ENCODE measurements at regions of chr11 and their contacts with region 1.

Region 1: DNA sequence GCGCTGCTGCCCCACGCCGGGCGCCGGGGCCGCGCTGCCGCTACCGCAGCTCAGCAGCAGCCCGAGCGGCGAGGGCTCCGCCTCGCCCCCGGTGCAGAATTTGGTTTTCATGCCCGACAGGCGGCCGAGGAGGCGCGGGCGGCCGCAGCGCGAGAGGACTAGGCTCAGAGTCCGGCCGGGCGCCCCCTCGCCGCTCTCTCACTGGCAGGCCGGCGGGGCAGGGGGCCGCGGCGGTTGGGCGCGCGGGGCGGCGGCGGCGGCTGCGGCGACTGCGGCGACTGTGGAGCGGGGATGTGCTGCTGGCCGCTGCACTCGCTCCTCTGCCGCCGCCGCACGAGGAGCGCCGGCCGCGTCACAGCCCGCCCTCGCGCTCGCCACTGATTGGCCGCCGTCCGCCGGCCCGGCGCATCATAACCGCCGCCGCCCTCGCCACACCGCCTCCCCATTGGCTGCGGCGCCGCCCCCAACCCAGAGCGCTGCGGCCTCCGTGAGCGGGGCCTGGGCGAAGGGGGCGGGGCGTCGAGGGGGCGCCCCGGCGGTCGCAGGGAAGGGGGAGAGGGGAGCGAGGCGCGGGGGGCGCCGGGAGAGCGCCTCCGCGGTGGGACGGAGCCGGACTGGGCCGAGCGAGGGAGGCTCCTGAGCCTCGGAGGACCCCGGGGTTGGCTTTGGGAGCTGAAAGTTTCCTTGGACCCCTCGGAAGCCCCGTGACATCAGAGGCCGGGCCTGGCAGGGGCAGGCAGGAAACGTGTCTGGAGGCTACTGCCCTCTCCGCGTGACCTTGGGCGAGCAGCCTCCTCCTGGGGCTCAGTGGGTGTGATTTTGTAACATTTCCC is at the start of gene CHKA:
- DNase-seq: peak; percentile 86
- H3K4me3 ChIP-seq: peak within 1 kb of the TSS; percentile 44 to 67 (median 67)
- H3K27ac ChIP-seq: peak within 1 kb of the TSS; percentile 33
- H3K4me1 ChIP-seq: peaks cover 12% of the 10 kb centered on the region
- H3K27me3 ChIP-seq: no peaks in the 10 kb centered on the region
- CTCF ChIP-seq: no peak
- total RNA-seq, gene CHKA: 11.5 to 13.2 TPM

Region 2: GRCh38 chr11:68038718-68039525 is 82.4 kb before region 1 on chr11 and contains the start of gene TCIRG1:
- CTCF ChIA-PET with region 1: no interaction called
- dilution Hi-C with region 1: no loop called
- in situ Hi-C with region 1: no loop called
- intact Hi-C with region 1: loop called (anchors 2 kb)
- DNase-seq: peak; percentile 59
- H3K4me3 ChIP-seq: peak within 1 kb of the TSS; percentile 61 to 66 (median 64)
- H3K27ac ChIP-seq: peak within 1 kb of the TSS; percentile 3
- H3K4me1 ChIP-seq: peaks cover 16% of the 10 kb centered on the region
- H3K27me3 ChIP-seq: no peaks in the 10 kb centered on the region
- CTCF ChIP-seq: no peak
- total RNA-seq, gene TCIRG1: 5.0 to 38.9 TPM

Region 3: DNA sequence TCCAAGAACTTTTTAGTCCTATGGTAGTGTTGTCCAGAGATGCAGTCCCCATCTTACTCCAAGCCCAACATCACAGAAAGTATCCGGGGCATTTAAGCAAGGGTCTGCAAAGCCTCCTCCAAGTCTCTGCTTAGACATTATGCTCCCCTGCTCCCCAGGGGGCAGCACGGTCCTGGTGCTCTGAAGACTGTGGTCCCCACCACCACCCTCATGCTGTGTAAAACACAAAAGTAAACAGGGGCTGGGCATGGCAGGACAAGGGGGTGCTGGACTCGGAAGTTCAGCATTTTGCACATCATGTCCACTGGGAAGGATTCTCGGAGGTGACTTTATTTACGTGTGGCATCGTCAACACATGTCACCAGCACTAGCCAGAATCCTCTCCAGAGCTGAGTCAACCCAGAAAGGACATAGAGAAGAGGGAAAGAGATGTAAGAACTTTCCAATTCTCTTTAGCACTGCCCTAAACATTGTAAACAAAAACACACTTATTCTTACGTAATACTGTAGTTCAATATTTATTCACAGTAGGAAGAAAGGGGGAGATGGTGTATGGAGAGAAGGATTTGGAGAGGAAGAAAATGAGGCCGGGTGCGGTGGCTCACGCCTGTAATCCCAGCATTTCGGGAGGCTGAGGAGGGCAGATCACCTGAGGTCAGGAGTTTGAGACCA is 44.8 kb before region 1 on chr11:
- CTCF ChIA-PET with region 1: no interaction called
- dilution Hi-C with region 1: no loop called
- in situ Hi-C with region 1: no loop called
- intact Hi-C with region 1: no loop called
- DNase-seq: no peak
- H3K4me3 ChIP-seq: no peak overlapping the region
- H3K27ac ChIP-seq: no peak overlapping the region
- H3K4me1 ChIP-seq: peaks cover 12% of the 10 kb centered on the region
- H3K27me3 ChIP-seq: no peaks in the 10 kb centered on the region
- CTCF ChIP-seq: no peak

Region 4: DNA sequence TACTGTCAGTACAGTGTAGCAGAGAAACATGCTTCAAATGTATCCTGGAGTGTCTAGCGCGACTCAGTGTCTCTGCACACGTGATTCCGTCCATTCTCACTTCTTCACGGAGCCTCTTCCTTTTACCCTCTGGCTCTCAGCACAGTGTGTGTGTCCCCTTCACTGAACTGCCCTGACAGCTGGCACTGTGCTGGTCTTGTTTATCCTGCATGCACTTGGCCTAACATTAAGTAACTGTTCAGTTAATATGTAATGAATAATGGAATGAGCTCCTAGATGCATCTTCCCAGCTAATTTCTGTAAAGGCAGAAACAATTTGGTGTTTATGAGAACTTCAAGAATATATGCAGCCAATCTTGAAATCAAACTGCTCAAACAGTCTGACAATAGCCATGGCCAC is 47.4 kb after region 1 on chr11:
- CTCF ChIA-PET with region 1: no interaction called
- dilution Hi-C with region 1: no loop called
- in situ Hi-C with region 1: no loop called
- intact Hi-C with region 1: no loop called
- DNase-seq: no peak
- H3K4me3 ChIP-seq: no peak overlapping the region
- H3K27ac ChIP-seq: no peak overlapping the region
- H3K4me1 ChIP-seq: no peaks in the 10 kb centered on the region
- H3K27me3 ChIP-seq: no peaks in the 10 kb centered on the region
- CTCF ChIP-seq: no peak

Region 5: GRCh38 chr11:68206187-68206601 is 84.9 kb after region 1 on chr11:
- CTCF ChIA-PET with region 1: no interaction called
- dilution Hi-C with region 1: no loop called
- in situ Hi-C with region 1: no loop called
- intact Hi-C with region 1: loop called (anchors 5 kb)
- DNase-seq: peak; percentile 44
- H3K4me3 ChIP-seq: no peak overlapping the region
- H3K27ac ChIP-seq: no peak overlapping the region
- H3K4me1 ChIP-seq: peaks cover 10% of the 10 kb centered on the region
- H3K27me3 ChIP-seq: no peaks in the 10 kb centered on the region
- CTCF ChIP-seq: peak; percentile 76 to 96

Region 6: GRCh38 chr11:68282141-68282970 is 161.1 kb after region 1 on chr11:
- CTCF ChIA-PET with region 1: no interaction called
- dilution Hi-C with region 1: no loop called
- in situ Hi-C with region 1: no loop called
- intact Hi-C with region 1: no loop called
- DNase-seq: peak; percentile 83
- H3K4me3 ChIP-seq: no peak overlapping the region
- H3K27ac ChIP-seq: peak overlapping the region; percentile 24
- H3K4me1 ChIP-seq: peaks cover 20% of the 10 kb centered on the region
- H3K27me3 ChIP-seq: no peaks in the 10 kb centered on the region
- CTCF ChIP-seq: no peak

Measured in mammary epithelial cell (primary cell).